Lower leg skin (tissue), 4 donors: ENCODE measurements at regions of chr14 and their contacts with region 1.

Region 1: GRCh38 chr14:99982537-99983250 is 82.5 kb upstream of the EVL start:
- DNase-seq: no peak
- H3K4me3 ChIP-seq: no peak overlapping the region
- CTCF ChIP-seq: peak in 1 of 3 donors; percentile 83
- POLR2A ChIP-seq: no peak

Region 2: GRCh38 chr14:100192672-100193416 is 210.2 kb after region 1 on chr14:
- intact Hi-C with region 1: loop called (anchors 10 kb)
- DNase-seq: peak; percentile 99 to 100
- H3K4me3 ChIP-seq: no peak overlapping the region
- CTCF ChIP-seq: peak in 1 of 3 donors; percentile 91
- POLR2A ChIP-seq: no peak